OCI-LY7 (cell line): ENCODE measurements at regions of chr14 and their contacts with region 1.

Region 1: GRCh38 chr14:20343092-20343861 is at the start of gene PARP2:
- DNase-seq: peak; percentile 99
- H3K4me3 ChIP-seq: peak within 1 kb of the TSS; percentile 81
- H3K27ac ChIP-seq: peak within 1 kb of the TSS; percentile 91
- H3K4me1 ChIP-seq: peaks cover 16% of the 10 kb centered on the region
- CTCF ChIP-seq: peak; percentile 52; the same call in 1 of the 2 replicates
- total RNA-seq, gene PARP2: 44.4 and 45.3 TPM in 2 replicates

Region 2: GRCh38 chr14:20295067-20295466 is 48.2 kb before region 1 on chr14:
- CTCF ChIA-PET with region 1: no interaction called
- POLR2A ChIA-PET with region 1: no interaction called
- intact Hi-C with region 1: no loop called
- DNase-seq: peak; percentile 9
- H3K4me3 ChIP-seq: no peak overlapping the region
- H3K27ac ChIP-seq: no peak overlapping the region
- H3K4me1 ChIP-seq: peaks cover 16% of the 10 kb centered on the region
- CTCF ChIP-seq: no peak

Region 3: GRCh38 chr14:20327005-20327869 is 16.0 kb before region 1 on chr14:
- CTCF ChIA-PET with region 1: interaction called, 11 read pairs
- POLR2A ChIA-PET with region 1: interaction called, 76 read pairs
- intact Hi-C with region 1: no loop called
- DNase-seq: peak; percentile 79
- H3K4me3 ChIP-seq: peak overlapping the region; percentile 13
- H3K27ac ChIP-seq: peak overlapping the region; percentile 10
- H3K4me1 ChIP-seq: peaks cover 50% of the 10 kb centered on the region
- CTCF ChIP-seq: peak; percentile 97

Region 4: GRCh38 chr14:20413045-20413799 is 69.9 kb after region 1 on chr14 and contains the start of gene TEP1:
- CTCF ChIA-PET with region 1: interaction called, 3 read pairs
- POLR2A ChIA-PET with region 1: interaction called, 9 read pairs
- intact Hi-C with region 1: loop called (anchors 1 kb)
- DNase-seq: peak; percentile 76
- H3K4me3 ChIP-seq: peak within 1 kb of the TSS; percentile 77
- H3K27ac ChIP-seq: peak within 1 kb of the TSS; percentile 48
- H3K4me1 ChIP-seq: peaks cover 37% of the 10 kb centered on the region
- CTCF ChIP-seq: no peak
- total RNA-seq, gene TEP1: 12.9 and 13.4 TPM in 2 replicates

Region 5: DNA sequence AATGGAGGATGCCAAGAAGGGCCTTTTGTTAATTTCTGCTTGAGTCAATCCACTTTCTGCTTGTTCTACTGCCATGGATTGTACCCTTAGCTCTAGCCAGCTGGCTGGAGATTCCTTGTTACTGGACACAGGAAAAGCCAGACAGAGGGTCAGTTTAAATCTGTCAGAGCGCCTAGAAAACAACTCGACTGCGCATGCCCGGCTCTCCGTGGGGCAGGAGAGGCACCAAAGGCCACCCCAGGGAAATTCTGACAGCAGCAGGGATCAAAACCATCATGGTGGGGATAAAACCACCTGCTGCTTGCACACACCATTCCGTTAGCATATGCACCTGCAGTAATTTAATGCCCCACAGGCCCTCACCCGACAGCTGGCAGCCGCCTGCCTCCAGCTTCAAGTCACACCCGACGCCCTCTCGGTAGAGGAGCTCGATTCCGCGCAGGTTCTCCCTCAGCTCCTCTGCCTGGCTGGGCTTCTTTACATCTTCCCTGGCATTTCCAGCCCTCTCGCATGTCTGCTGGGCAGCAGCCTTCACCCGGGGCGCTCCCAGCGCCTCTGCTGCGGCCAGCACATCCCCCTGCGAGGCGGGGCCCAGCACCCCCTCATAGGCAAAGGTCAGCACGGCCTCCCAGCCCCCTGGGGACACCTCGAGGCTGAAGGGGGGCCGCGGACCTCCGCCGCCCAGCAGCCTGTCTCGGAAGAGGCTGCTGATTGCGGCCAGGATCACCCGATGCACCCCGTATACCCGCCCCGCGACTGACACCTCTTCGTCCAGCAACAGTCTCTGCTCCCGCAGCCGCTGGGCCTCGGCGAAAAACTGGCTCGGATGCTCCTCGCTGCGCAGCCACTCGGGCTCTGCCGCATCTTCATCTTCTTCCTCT is 91.7 kb after region 1 on chr14:
- CTCF ChIA-PET with region 1: no interaction called
- POLR2A ChIA-PET with region 1: no interaction called
- intact Hi-C with region 1: no loop called
- DNase-seq: no peak
- H3K4me3 ChIP-seq: no peak overlapping the region
- H3K27ac ChIP-seq: no peak overlapping the region
- H3K4me1 ChIP-seq: peaks cover 31% of the 10 kb centered on the region
- CTCF ChIP-seq: no peak

Region 6: GRCh38 chr14:20461274-20462001 is 118.2 kb after region 1 on chr14 and contains the start of gene PIP4P1:
- CTCF ChIA-PET with region 1: no interaction called
- POLR2A ChIA-PET with region 1: interaction called, 58 read pairs
- intact Hi-C with region 1: loop called (anchors 1 kb)
- DNase-seq: peak; percentile 100
- H3K4me3 ChIP-seq: peak within 1 kb of the TSS; percentile 83
- H3K27ac ChIP-seq: peak within 1 kb of the TSS; percentile 84
- H3K4me1 ChIP-seq: peaks cover 57% of the 10 kb centered on the region
- CTCF ChIP-seq: no peak
- total RNA-seq, gene PIP4P1: 23.3 and 26.9 TPM in 2 replicates

Region 7: DNA sequence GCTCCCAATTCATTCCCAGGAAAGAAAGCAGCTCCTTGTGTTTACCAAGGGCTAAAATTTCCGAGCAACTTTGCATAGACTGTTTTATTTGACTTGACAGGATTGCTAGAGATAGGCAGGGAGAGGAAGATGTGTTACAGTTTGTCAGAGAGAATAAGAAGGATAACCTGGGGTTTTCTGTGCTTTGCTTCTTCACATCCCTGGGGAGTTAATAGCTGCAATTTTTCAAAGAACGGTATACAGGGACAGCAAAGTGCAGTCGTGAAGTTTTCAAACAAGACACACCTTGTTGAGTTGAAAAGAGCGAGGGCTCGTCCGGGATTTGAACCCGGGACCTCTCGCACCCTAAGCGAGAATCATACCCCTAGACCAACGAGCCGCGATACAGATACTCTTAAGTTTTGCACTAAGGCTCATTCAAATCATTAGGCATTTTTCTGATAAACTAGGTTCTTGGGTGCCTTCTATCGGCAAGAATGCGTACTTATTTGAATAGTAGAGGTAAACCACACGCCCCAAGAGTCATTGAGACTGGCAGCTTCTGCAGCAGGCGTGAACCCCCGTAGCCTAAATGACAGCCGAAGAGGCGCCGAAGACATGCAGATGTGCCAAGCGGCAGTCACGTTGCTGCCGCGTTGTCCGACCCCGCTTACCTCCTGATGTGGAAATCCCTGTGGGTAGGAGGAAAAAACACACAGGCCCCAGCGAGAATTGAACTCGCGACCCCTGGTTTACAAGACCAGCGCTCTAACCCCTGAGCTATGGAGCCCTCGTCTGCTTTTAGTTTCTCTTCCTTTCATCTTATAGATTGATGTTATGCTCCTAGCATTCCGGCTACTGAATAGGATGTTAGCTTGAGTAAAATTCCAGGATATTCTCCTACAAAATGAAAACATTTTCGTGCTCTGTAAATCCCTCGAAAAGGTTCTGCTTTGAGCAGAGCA is 270.1 kb after region 1 on chr14:
- CTCF ChIA-PET with region 1: interaction called, 3 read pairs
- POLR2A ChIA-PET with region 1: interaction called, 3 read pairs
- intact Hi-C with region 1: loop called (anchors 1 kb)
- DNase-seq: peak; percentile 93
- H3K4me3 ChIP-seq: peak overlapping the region; percentile 72
- H3K27ac ChIP-seq: peak overlapping the region; percentile 11
- H3K4me1 ChIP-seq: peaks cover 47% of the 10 kb centered on the region
- CTCF ChIP-seq: peak; percentile 79